IMR-90 (cell line): ENCODE measurements at regions of chr3 and their contacts with region 1.

Region 1: DNA sequence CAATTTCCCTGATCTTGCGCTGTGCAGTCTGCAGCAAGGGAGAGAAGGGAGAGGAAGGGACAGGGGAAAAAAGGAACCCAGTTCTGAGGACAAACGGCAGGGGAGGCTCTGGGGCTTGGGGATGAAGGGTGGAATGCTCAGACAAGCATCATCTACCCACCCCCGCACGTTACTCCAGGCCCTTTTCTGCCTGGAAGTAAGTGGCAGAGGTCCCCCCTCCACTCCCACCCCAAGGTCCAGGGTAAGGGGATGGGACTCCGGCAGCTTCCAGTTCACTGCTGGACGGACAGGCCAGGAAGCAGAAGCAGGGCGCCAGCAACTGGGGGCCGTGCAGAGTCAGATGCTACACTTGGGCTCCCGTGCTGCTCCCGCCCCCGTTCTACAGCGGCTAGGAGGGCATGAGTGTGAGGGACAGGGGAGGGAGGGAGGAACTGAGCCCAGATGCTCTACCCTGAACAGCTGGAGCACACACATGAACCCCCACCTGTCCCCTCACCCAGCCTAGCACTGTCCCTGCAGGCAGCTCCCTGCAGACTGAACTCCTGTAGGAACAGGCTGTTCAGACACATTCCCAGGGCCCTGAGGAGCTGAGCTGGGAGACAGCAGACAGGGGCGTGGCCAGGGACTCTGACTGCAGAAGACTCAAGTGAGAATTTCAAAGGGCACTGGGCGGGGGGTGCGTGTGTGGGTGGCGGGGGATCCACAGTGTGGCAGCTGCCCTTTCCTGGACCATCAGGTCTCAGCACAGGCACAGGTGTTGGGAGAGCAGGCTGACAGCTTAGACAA is 59.7 kb downstream of the SENP2 start:
- DNase-seq: no peak
- ATAC-seq: peak; percentile 30; the same call in 1 of the 2 replicates
- H3K4me3 ChIP-seq: no peak overlapping the region
- H3K27ac ChIP-seq: no peak overlapping the region
- H3K4me1 ChIP-seq: no peaks in the 10 kb centered on the region
- H3K27me3 ChIP-seq: no peaks in the 10 kb centered on the region
- CTCF ChIP-seq: no peak
- POLR2A ChIP-seq: no peak
- RAD21 ChIP-seq: no peak

Region 2: GRCh38 chr3:184842433-184842832 is 803.4 kb before region 1 on chr3:
- CTCF ChIA-PET with region 1: no interaction called
- POLR2A ChIA-PET with region 1: interaction called, 12 read pairs
- dilution Hi-C with region 1: no loop called
- in situ Hi-C with region 1: no loop called
- intact Hi-C with region 1: no loop called
- DNase-seq: peak; percentile 10
- ATAC-seq: no peak; the same call in 1 of the 2 replicates
- H3K4me3 ChIP-seq: no peak overlapping the region
- H3K27ac ChIP-seq: no peak overlapping the region
- H3K4me1 ChIP-seq: peaks cover 1% of the 10 kb centered on the region; the same call in 1 of the 2 replicates
- H3K27me3 ChIP-seq: no peaks in the 10 kb centered on the region
- CTCF ChIP-seq: no peak
- POLR2A ChIP-seq: no peak
- RAD21 ChIP-seq: no peak

Region 3: GRCh38 chr3:185717121-185717520 is 71.3 kb after region 1 on chr3:
- CTCF ChIA-PET with region 1: no interaction called
- POLR2A ChIA-PET with region 1: no interaction called
- dilution Hi-C with region 1: no loop called
- in situ Hi-C with region 1: no loop called
- intact Hi-C with region 1: no loop called
- DNase-seq: peak; percentile 93
- ATAC-seq: peak; percentile 73
- H3K4me3 ChIP-seq: no peak overlapping the region
- H3K27ac ChIP-seq: peak overlapping the region; percentile 71
- H3K4me1 ChIP-seq: peaks cover 30% of the 10 kb centered on the region
- H3K27me3 ChIP-seq: no peaks in the 10 kb centered on the region
- CTCF ChIP-seq: no peak
- POLR2A ChIP-seq: no peak; the same call in 1 of the 2 replicates
- RAD21 ChIP-seq: no peak

Region 4: GRCh38 chr3:186452517-186452916 is 806.7 kb after region 1 on chr3:
- CTCF ChIA-PET with region 1: no interaction called
- POLR2A ChIA-PET with region 1: no interaction called
- dilution Hi-C with region 1: no loop called
- in situ Hi-C with region 1: no loop called
- intact Hi-C with region 1: no loop called
- DNase-seq: peak; percentile 80
- ATAC-seq: peak; percentile 96
- H3K4me3 ChIP-seq: no peak overlapping the region
- H3K27ac ChIP-seq: no peak overlapping the region
- H3K4me1 ChIP-seq: peaks cover 3% of the 10 kb centered on the region; the same call in 1 of the 2 replicates
- H3K27me3 ChIP-seq: peaks cover 15% of the 10 kb centered on the region
- CTCF ChIP-seq: no peak
- POLR2A ChIP-seq: no peak
- RAD21 ChIP-seq: no peak